Lower leg skin (tissue), 4 donors: ENCODE measurements at regions of chr14 and their contacts with region 1.

Region 1: DNA sequence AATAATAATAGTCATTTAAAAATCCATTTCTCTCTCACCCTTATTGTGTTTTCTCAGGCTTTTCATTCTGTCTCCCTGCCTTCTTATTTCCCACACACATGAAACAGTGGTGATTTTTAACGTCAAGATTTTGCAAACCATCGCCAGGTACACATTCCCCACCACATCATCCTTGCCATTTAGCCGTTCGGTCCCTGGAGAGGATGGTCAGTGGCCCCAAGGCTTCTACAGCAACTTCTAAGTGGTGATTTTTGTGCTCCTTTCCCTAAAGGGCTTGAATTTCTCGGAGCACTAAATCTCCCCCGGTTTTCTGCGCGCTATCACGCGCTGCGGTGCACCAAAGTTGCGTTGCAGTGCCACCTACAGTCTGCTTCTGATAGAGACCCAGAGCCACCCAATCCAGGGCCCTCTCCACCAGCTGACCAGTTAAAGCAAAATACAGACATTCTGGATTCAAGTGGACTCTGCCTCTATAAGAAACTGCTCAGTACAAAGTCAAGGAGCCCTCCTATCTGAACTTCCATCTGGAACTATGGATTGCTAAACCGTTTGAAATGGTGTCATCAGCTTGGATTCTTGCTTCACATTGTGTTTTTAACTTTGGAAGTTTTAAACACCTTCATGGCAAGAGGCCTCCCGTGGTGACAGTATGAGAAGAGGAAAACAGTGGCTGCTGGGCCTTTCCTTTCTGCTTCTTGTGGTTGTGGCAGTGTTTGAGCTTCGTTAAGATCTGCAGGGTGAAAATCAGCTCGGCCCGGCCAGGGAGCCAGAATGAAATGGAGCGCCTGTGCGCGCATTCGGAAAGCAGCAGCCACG is 234.0 kb downstream of the SPTSSA start:
- DNase-seq: peak; percentile 56 to 90
- H3K4me3 ChIP-seq: no peak overlapping the region
- CTCF ChIP-seq: peak in 1 of 3 donors; percentile 58
- POLR2A ChIP-seq: no peak

Region 2: DNA sequence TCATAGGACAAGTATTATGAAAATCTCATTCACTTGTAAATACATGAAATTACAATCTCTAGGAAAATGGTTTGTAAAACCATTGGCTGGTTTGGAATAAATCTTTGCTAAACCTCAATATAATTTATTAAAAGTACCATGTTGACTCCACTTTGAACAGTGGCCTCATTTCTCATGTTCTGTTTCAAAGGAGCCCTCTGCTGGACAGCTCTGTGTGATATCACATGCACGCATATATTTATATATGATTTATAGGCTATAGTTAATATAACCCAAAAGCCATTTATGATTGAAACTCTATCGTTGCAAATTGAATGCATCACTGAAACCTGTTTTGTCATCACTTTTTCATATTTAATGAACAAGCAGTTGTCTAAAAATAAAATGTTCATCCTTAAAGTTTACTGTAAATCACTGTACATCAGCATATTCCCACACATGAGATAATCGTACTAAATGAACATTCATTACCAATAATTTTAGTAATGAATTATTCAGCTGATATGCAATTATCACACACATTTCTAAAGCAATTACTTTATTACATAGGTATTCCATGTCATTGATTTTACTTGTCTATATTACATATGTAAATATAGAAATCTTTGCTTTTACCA is 795.5 kb before region 1 on chr14:
- intact Hi-C with region 1: no loop called
- DNase-seq: no peak
- H3K4me3 ChIP-seq: no peak overlapping the region
- CTCF ChIP-seq: no peak
- POLR2A ChIP-seq: no peak

Region 3: GRCh38 chr14:33943096-33943884 is 284.8 kb before region 1 on chr14:
- intact Hi-C with region 1: loop called (anchors 10 kb)
- DNase-seq: peak in 1 of 2 donors; percentile 36
- H3K4me3 ChIP-seq: no peak overlapping the region
- CTCF ChIP-seq: no peak
- POLR2A ChIP-seq: no peak

Region 4: GRCh38 chr14:34113005-34113511 is 115.0 kb before region 1 on chr14:
- intact Hi-C with region 1: no loop called
- DNase-seq: no peak
- H3K4me3 ChIP-seq: no peak overlapping the region
- CTCF ChIP-seq: no peak
- POLR2A ChIP-seq: no peak

Region 5: DNA sequence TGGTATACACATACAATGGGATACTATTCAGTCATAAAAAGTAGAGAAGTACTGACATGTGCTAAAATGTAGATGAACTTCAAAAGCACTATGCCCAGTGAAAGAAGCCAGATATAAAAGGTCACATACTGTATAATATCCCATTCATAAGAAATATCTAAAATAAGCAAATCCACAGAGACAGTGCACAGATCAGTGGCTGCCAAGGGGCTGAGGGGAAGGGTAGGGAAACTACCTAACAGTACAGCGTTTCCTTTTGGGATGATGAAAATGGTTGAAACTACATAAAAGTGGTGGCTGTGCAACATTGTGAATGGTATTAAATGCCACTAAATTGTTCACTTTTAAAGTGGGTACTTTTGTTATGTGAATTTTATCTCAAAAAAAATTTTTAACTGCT is 299.5 kb after region 1 on chr14:
- intact Hi-C with region 1: no loop called
- DNase-seq: no peak
- H3K4me3 ChIP-seq: no peak overlapping the region
- CTCF ChIP-seq: no peak
- POLR2A ChIP-seq: no peak